OCI-LY7 (cell line): ENCODE measurements at regions of chr1 and their contacts with region 1.

Region 1: GRCh38 chr1:115340879-115341278 is 2.8 kb upstream of the NGF start:
- DNase-seq: no peak
- H3K4me3 ChIP-seq: no peak overlapping the region
- H3K27ac ChIP-seq: no peak overlapping the region
- H3K4me1 ChIP-seq: peaks cover 40% of the 10 kb centered on the region
- CTCF ChIP-seq: no peak

Region 2: DNA sequence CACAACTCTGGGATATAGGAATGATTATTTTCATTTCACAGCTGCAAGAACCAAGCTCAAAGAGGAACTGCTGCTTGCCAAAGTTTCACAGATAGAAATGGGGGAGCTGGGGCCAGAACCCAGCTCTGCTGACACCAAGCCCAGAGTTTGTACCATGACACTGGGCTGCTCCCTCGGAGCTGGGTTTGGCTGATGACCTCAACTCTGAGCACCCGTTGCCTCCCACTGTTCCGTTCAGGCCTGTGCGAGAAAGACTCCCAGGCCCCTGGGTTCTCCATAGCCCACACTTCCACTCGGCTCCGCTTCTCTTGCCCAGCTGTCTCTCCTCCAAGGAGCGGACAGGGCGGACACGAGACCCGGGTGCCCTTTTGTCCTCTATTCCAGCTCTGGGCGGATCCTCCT is 58.1 kb before region 1 on chr1:
- CTCF ChIA-PET with region 1: no interaction called
- POLR2A ChIA-PET with region 1: no interaction called
- intact Hi-C with region 1: no loop called
- DNase-seq: peak; percentile 22
- H3K4me3 ChIP-seq: no peak overlapping the region
- H3K27ac ChIP-seq: no peak overlapping the region
- H3K4me1 ChIP-seq: peaks cover 18% of the 10 kb centered on the region
- CTCF ChIP-seq: no peak

Region 3: DNA sequence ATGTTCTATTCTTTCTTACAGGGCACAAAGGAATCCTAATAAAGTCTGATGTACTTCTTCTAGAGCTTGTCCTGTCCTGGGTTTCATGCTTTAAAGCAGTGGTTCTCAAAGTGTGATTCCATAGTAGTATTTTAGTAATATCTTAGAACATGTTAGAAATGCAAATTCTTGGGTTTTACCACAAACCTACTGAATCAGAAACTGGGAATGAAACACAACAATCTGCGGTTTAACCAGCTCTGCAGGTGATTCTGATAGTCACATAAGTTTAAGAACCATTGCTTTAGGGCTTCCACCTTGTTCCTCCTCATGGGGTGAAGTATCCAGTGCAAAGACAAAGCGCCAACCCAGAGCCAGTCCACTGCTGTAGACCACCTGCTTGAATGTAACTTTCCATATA is 43.9 kb before region 1 on chr1:
- CTCF ChIA-PET with region 1: no interaction called
- POLR2A ChIA-PET with region 1: no interaction called
- intact Hi-C with region 1: loop called (anchors 5 kb)
- DNase-seq: no peak
- H3K4me3 ChIP-seq: no peak overlapping the region
- H3K27ac ChIP-seq: no peak overlapping the region
- H3K4me1 ChIP-seq: peaks cover 18% of the 10 kb centered on the region
- CTCF ChIP-seq: no peak

Region 4: GRCh38 chr1:115463363-115463746 is 122.5 kb after region 1 on chr1:
- CTCF ChIA-PET with region 1: no interaction called
- POLR2A ChIA-PET with region 1: no interaction called
- intact Hi-C with region 1: loop called (anchors 5 kb)
- DNase-seq: peak; percentile 14
- H3K4me3 ChIP-seq: no peak overlapping the region
- H3K27ac ChIP-seq: no peak overlapping the region
- H3K4me1 ChIP-seq: peaks cover 16% of the 10 kb centered on the region
- CTCF ChIP-seq: peak; percentile 37